Activated CD4-positive, alpha-beta memory T cell treated with anti-CD3 and anti-CD28 coated beads for 36 hours (primary cell): ENCODE measurements at regions of chr2 and their contacts with region 1.

Region 1: GRCh38 chr2:219155054-219155644 is 5.5 kb downstream of the NHEJ1 start:
- DNase-seq: peak; percentile 31
- H3K4me3 Mint-ChIP-seq: no peak overlapping the region
- H3K27ac Mint-ChIP-seq: no peak overlapping the region
- H3K4me1 Mint-ChIP-seq: peaks cover 8% of the 10 kb centered on the region
- H3K27me3 Mint-ChIP-seq: no peaks in the 10 kb centered on the region

Region 2: GRCh38 chr2:219073413-219074129 is 81.6 kb before region 1 on chr2:
- CTCF ChIA-PET with region 1: interaction called, 18 read pairs
- POLR2A ChIA-PET with region 1: no interaction called
- intact Hi-C with region 1: no loop called
- DNase-seq: peak; percentile 25
- H3K4me3 Mint-ChIP-seq: no peak overlapping the region
- H3K27ac Mint-ChIP-seq: no peak overlapping the region
- H3K4me1 Mint-ChIP-seq: no peaks in the 10 kb centered on the region
- H3K27me3 Mint-ChIP-seq: no peaks in the 10 kb centered on the region

Region 3: DNA sequence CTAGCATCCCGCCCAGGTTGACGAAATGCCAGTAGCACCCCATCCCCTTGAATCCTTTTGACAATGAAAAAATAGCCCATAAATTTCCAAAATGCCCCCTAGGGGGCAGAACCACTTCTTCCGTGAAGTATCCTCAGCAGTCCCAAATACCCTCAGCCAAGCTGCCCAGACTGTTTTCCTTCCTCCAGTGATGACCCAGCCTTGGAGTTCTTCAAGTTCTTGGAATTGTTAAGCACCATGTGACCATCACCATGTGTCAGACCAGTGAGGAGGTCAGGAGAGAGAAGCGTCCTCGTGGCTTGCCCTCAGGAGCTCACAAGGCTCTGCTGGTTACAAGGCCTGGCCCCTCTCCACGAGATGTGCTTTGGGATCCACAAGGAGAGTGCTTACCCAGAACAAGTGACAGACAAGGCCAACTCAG is 16.1 kb after region 1 on chr2:
- CTCF ChIA-PET with region 1: interaction called, 42 read pairs
- POLR2A ChIA-PET with region 1: no interaction called
- intact Hi-C with region 1: no loop called
- DNase-seq: peak; percentile 27
- H3K4me3 Mint-ChIP-seq: no peak overlapping the region
- H3K27ac Mint-ChIP-seq: peak overlapping the region; percentile 54
- H3K4me1 Mint-ChIP-seq: peaks cover 35% of the 10 kb centered on the region
- H3K27me3 Mint-ChIP-seq: no peaks in the 10 kb centered on the region

Region 4: DNA sequence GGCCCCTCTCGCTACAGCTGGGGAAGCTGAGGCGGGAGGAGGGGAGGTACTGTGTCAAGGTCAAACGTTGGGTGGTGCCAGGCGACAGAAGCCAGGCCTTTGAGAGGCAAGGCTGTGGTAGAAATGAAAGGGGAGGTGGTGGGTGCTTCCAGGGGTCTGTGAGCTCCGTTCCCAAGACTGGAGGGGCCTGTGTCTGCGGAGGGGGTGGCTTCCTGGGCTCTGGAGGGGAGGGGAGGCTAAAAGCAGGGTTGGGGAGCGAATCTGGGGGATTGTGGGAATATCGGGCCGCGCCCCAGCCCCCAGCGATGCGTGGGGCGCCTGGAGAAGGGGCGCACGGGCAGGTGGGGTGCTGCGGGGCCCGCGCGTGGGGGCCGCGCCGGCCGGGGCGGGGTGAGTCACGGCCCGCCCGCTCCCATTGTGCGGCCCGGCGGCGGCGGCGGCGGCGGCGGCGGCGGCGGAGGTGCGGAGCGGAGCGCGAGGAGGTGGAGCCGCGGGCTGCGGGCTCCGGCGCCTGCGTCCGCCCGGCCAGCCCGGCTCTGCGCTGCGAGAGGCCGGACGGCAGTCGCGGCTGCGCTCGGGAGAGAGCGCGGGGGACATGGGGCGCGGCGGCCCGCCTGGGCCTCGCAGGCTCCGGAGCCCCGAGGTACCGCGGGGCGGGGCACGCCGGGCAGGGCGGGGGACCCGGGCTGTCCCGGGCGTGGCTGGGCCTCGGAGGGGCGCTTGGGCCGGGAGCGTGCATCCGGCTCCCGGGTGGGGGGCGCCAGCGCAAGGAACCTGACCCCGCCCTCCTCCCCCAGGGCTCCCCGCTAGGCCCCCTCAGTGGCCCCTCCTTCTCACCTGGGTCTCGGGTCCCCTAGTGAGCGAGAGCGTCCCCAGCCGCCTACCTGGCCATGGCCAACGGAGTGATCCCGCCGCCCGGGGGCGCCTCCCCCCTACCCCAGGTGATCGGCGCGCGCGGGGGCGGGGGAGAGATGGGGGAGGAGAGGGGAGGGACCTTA is 472.3 kb after region 1 on chr2 and contains the start of gene SLC4A3:
- CTCF ChIA-PET with region 1: no interaction called
- POLR2A ChIA-PET with region 1: no interaction called
- intact Hi-C with region 1: no loop called
- DNase-seq: no peak
- H3K4me3 Mint-ChIP-seq: peak within 1 kb of the TSS; percentile 6
- H3K27ac Mint-ChIP-seq: no peak within 1 kb of the TSS
- H3K4me1 Mint-ChIP-seq: peaks cover 4% of the 10 kb centered on the region
- H3K27me3 Mint-ChIP-seq: peaks cover 17% of the 10 kb centered on the region
- total RNA-seq, gene SLC4A3: not detected